Activated CD8-positive, alpha-beta T cell treated with anti-CD3 and anti-CD28 coated beads, Interleukin-2, amount 10 ng/mL, durations not matched to agents 7 days and 5 days (primary cell): ENCODE measurements at regions of chr12 and their contacts with region 1.

Region 1: GRCh38 chr12:54379401-54380201 is 4.9 kb downstream of the ZNF385A start:
- DNase-seq: peak; percentile 93
- ATAC-seq: peak; percentile 95
- H3K4me3 Mint-ChIP-seq: peak overlapping the region; percentile 43
- H3K27ac Mint-ChIP-seq: no peak overlapping the region
- H3K4me1 Mint-ChIP-seq: peaks cover 12% of the 10 kb centered on the region
- H3K27me3 Mint-ChIP-seq: no peaks in the 10 kb centered on the region

Region 2: GRCh38 chr12:54280468-54281260 is 98.9 kb before region 1 on chr12 and contains the start of gene HNRNPA1:
- CTCF ChIA-PET with region 1: interaction called, 12 read pairs
- POLR2A ChIA-PET with region 1: interaction called, 6 read pairs
- DNase-seq: peak; percentile 98
- ATAC-seq: peak; percentile 89
- H3K4me3 Mint-ChIP-seq: no peak within 1 kb of the TSS
- H3K27ac Mint-ChIP-seq: no peak within 1 kb of the TSS
- H3K4me1 Mint-ChIP-seq: peaks cover 55% of the 10 kb centered on the region
- H3K27me3 Mint-ChIP-seq: no peaks in the 10 kb centered on the region
- total RNA-seq, gene HNRNPA1: 1,520 to 1,553 TPM

Region 3: GRCh38 chr12:54337280-54337842 is 42.2 kb before region 1 on chr12:
- CTCF ChIA-PET with region 1: interaction called, 54 read pairs
- POLR2A ChIA-PET with region 1: no interaction called
- DNase-seq: no peak
- ATAC-seq: no peak
- H3K4me3 Mint-ChIP-seq: no peak overlapping the region
- H3K27ac Mint-ChIP-seq: no peak overlapping the region
- H3K4me1 Mint-ChIP-seq: peaks cover 6% of the 10 kb centered on the region
- H3K27me3 Mint-ChIP-seq: no peaks in the 10 kb centered on the region

Region 4: DNA sequence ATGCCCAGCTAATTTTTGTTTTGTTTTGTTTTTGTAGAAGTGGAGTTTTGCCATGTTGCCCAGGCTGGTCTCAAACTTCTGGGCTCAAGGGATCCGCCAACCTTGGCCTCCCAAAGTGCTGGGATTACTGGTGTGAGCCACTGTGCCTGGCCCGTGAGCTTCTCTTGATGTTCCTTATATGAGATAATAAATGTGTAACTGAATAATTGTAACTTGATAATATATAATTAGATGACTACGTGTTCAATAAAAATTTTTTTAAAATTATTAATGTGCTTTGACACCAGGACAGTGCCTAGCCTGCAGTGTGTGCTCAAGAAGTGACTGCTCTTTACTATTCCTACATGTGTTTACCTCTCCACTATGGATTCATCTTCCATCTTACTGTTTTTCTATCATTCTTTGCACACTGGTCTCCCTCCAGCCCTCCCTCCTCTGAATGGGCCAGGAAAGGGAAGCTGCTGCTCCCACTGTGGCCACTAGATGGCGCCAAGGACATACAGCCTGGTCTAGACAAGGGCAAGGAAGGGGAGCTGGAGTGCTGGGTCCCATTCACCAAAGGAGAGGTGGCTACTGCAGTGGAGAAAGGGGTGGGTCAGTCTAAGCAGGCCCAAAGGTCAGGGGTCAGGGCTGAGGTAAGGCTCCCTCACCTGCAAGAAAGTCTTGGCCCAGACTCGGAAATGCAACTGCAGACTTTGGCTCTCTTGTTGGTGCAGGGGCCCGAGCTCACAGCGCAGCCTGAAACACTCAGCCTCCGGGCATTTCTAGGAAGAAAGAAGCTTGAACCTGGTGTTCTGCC is 19.6 kb after region 1 on chr12:
- CTCF ChIA-PET with region 1: interaction called, 50 read pairs
- POLR2A ChIA-PET with region 1: interaction called, 3 read pairs
- DNase-seq: peak; percentile 92
- ATAC-seq: peak; percentile 91
- H3K4me3 Mint-ChIP-seq: no peak overlapping the region
- H3K27ac Mint-ChIP-seq: no peak overlapping the region
- H3K4me1 Mint-ChIP-seq: peaks cover 29% of the 10 kb centered on the region
- H3K27me3 Mint-ChIP-seq: no peaks in the 10 kb centered on the region

Region 5: DNA sequence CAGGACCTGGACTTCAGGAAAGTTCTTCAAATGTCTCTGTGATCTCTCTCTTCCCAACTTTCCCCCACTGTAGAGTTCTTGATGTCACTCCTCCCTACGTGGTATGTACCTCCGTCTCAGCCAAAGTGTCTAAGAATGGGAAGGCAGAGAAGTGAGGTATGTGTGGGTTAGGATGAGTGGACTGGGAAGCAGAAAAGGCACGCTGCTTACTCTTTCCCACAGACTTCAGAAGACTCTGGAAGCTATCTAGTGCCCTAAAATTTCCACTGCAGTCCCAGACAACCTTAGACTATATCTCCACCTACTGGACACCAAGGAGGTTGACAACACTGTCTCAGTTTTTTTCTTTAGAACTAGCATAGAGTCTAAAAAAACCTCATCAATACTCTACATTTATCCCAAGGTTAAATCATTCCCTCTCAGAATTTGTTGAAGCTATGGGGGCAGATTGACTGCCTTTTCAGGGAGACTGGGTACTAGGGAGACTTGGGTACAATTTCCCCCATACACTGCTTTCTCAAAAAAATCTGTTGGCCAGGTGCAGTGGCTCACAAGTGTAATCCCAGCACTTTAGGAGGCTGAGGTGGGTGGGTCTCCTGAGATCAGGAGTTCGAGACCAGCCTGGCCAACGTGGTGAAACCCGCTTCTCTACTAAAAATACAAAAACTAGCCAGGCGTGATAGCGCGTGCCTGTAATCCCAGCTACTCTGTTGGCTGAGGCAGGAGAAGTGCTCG is 60.1 kb after region 1 on chr12:
- CTCF ChIA-PET with region 1: interaction called, 41 read pairs
- POLR2A ChIA-PET with region 1: no interaction called
- DNase-seq: no peak
- ATAC-seq: peak; percentile 86
- H3K4me3 Mint-ChIP-seq: no peak overlapping the region
- H3K27ac Mint-ChIP-seq: peak overlapping the region; percentile 23
- H3K4me1 Mint-ChIP-seq: peaks cover 6% of the 10 kb centered on the region
- H3K27me3 Mint-ChIP-seq: peaks cover 12% of the 10 kb centered on the region

Region 6: GRCh38 chr12:54800548-54800947 is 420.9 kb after region 1 on chr12:
- CTCF ChIA-PET with region 1: no interaction called
- POLR2A ChIA-PET with region 1: no interaction called
- DNase-seq: no peak
- ATAC-seq: no peak
- H3K4me3 Mint-ChIP-seq: no peak overlapping the region
- H3K27ac Mint-ChIP-seq: no peak overlapping the region
- H3K4me1 Mint-ChIP-seq: no peaks in the 10 kb centered on the region
- H3K27me3 Mint-ChIP-seq: no peaks in the 10 kb centered on the region